MCF 10A (cell line): ENCODE measurements at regions of chr1 and their contacts with region 1.

Region 1: GRCh38 chr1:27568300-27569087 is 35.5 kb downstream of the AHDC1 start:
- DNase-seq: peak; percentile 97
- H3K4me3 Mint-ChIP-seq: peak overlapping the region; percentile 61
- H3K27ac Mint-ChIP-seq: peak overlapping the region; percentile 22
- H3K4me1 Mint-ChIP-seq: peaks cover 43% of the 10 kb centered on the region
- H3K27me3 Mint-ChIP-seq: no peaks in the 10 kb centered on the region
- CTCF ChIP-seq: peak; percentile 64

Region 2: DNA sequence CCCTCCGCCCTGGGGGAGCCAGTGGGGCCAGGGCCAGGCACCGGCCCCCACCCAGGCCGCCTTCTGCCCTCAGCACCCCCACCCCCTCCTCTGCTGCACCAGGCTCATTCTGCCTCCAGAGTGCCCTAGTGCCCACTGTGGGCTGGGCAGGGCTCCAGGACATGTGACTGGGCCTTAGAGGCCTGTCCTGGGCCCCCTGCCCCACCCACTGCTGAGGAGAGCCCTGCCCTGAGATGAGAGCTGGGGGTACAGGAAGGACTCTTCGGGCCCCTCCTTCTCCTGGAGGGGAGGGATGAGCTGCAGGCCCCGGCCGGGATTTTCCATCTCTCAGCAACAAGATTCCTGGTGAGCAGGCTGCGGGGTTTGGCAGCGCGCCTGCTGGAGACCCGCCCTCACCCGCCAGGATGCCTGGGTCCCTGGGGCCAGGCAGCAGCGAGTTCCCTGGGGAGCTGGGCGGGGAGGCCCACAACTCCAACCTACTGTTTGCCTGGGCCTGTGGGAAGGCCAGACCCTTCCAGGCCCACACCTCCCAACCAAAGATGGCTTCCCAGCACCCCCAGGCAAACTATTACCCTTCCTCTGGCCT is 21.4 kb after region 1 on chr1:
- CTCF ChIA-PET with region 1: interaction called, 12 read pairs
- POLR2A ChIA-PET with region 1: interaction called, 9 read pairs
- intact Hi-C with region 1: no loop called
- DNase-seq: peak; percentile 28
- H3K4me3 Mint-ChIP-seq: no peak overlapping the region
- H3K27ac Mint-ChIP-seq: no peak overlapping the region
- H3K4me1 Mint-ChIP-seq: peaks cover 10% of the 10 kb centered on the region
- H3K27me3 Mint-ChIP-seq: no peaks in the 10 kb centered on the region
- CTCF ChIP-seq: no peak

Region 3: GRCh38 chr1:27719286-27720251 is 151.1 kb after region 1 on chr1:
- CTCF ChIA-PET with region 1: no interaction called
- POLR2A ChIA-PET with region 1: no interaction called
- intact Hi-C with region 1: no loop called
- DNase-seq: peak; percentile 10
- H3K4me3 Mint-ChIP-seq: no peak overlapping the region
- H3K27ac Mint-ChIP-seq: no peak overlapping the region
- H3K4me1 Mint-ChIP-seq: no peaks in the 10 kb centered on the region
- H3K27me3 Mint-ChIP-seq: peaks cover 53% of the 10 kb centered on the region
- CTCF ChIP-seq: peak; percentile 14